ENCODE measurements at regions of chr1 and their contacts with region 1.

Region 1: GRCh38 chr1:115337633-115338456 is at the start of gene NGF:
- DNase-seq: peak; percentile 44 to 82 (median 68)
- ATAC-seq: peak; percentile 65 to 91 (median 84)
- H3K4me3 ChIP-seq: peak within 1 kb of the TSS; percentile 57 to 91 (median 70)
- H3K27ac ChIP-seq: peak within 1 kb of the TSS; percentile 15 to 91 (median 80)
- H3K4me1 ChIP-seq: peaks cover 0 to 50% (median 22%) of the 10 kb centered on the region in 12 donors
- H3K27me3 ChIP-seq: peaks cover 0 to 32% (median 0%) of the 10 kb centered on the region in 9 donors
- CTCF ChIP-seq: peak in 1 of 12 donors; percentile 12
- POLR2A ChIP-seq: peak; percentile 27 to 77
- total RNA-seq, gene NGF: 0.94 to 13.6 (median 2.9) TPM

Region 2: GRCh38 chr1:115098979-115099692 is 238.7 kb before region 1 on chr1:
- intact Hi-C with region 1: no loop called
- DNase-seq: peak in 2 of 5 donors; percentile 21 to 45
- ATAC-seq: peak; percentile 74 to 80 (median 76)
- H3K4me3 ChIP-seq: peak overlapping the region in 8 of 12 donors; percentile 15 to 52 (median 36)
- H3K27ac ChIP-seq: peak overlapping the region in 7 of 12 donors; percentile 10 to 82 (median 38)
- H3K4me1 ChIP-seq: peaks cover 0 to 16% (median 0%) of the 10 kb centered on the region in 12 donors
- H3K27me3 ChIP-seq: no peaks in the 10 kb centered on the region
- CTCF ChIP-seq: no peak
- POLR2A ChIP-seq: no peak

Region 3: DNA sequence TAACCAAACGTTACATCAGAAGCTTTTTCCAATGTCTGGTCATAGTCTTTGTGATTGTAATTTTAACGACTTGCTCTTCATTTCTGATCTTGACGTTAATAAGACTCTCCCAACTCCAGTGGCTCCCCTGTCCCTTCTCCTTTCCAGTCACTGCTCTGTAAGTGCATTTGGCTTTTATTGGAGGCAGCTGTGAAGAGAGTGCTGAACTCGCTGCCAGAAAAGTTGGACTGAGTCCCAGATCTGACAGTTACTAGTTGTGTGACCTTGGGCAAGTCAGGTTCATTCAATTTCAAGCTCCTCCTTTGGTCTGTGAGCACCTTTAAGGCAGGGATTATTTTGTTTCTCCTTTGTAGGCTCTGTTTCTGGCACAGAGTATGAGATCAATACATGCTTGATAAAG is 138.9 kb before region 1 on chr1:
- intact Hi-C with region 1: no loop called
- DNase-seq: peak in 4 of 5 donors; percentile 57 to 66 (median 62)
- ATAC-seq: peak; percentile 70 to 96 (median 94)
- H3K4me3 ChIP-seq: no peak overlapping the region
- H3K27ac ChIP-seq: peak overlapping the region in 6 of 12 donors; percentile 2 to 50 (median 17)
- H3K4me1 ChIP-seq: peaks cover 0 to 32% (median 9%) of the 10 kb centered on the region in 12 donors
- H3K27me3 ChIP-seq: no peaks in the 10 kb centered on the region
- CTCF ChIP-seq: no peak
- POLR2A ChIP-seq: no peak

Region 4: DNA sequence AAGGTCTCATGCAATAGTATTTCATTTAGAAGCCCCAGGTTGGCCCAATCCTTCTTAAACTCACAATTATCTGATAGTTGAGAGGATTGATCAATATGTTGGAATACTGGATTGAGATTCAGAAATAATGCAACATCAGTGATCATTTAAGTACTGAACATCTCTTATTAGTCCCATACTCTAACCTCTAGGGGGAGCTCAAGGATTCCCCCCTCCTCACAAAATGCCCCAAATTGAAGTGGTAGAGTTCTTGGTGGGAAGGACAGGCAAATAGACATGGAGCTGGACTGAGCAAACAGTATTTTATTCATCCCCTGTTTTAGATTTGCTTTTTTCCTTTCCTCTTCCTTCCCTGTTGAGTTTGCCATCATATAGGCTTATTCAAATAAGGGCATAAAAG is 62.6 kb before region 1 on chr1:
- intact Hi-C with region 1: loop called in 2 of 10 experiments (anchors 5 to 10 kb)
- DNase-seq: no peak
- ATAC-seq: no peak
- H3K4me3 ChIP-seq: no peak overlapping the region
- H3K27ac ChIP-seq: peak overlapping the region in 5 of 12 donors; percentile 7 to 66 (median 28)
- H3K4me1 ChIP-seq: peaks cover 0 to 16% (median 0%) of the 10 kb centered on the region in 12 donors
- H3K27me3 ChIP-seq: no peaks in the 10 kb centered on the region
- CTCF ChIP-seq: peak in 11 of 12 donors; percentile 22 to 51 (median 33)
- POLR2A ChIP-seq: no peak

Region 5: DNA sequence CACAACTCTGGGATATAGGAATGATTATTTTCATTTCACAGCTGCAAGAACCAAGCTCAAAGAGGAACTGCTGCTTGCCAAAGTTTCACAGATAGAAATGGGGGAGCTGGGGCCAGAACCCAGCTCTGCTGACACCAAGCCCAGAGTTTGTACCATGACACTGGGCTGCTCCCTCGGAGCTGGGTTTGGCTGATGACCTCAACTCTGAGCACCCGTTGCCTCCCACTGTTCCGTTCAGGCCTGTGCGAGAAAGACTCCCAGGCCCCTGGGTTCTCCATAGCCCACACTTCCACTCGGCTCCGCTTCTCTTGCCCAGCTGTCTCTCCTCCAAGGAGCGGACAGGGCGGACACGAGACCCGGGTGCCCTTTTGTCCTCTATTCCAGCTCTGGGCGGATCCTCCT is 55.0 kb before region 1 on chr1:
- intact Hi-C with region 1: loop called in 3 of 10 experiments (anchors 5 to 10 kb)
- DNase-seq: peak; percentile 80 to 89 (median 83)
- ATAC-seq: peak; percentile 82 to 96 (median 93)
- H3K4me3 ChIP-seq: peak overlapping the region in 5 of 12 donors; percentile 5 to 42 (median 23)
- H3K27ac ChIP-seq: peak overlapping the region; percentile 55 to 89 (median 82)
- H3K4me1 ChIP-seq: peaks cover 0 to 35% (median 14%) of the 10 kb centered on the region in 12 donors
- H3K27me3 ChIP-seq: no peaks in the 10 kb centered on the region
- CTCF ChIP-seq: no peak
- POLR2A ChIP-seq: no peak

Region 6: GRCh38 chr1:115289940-115290339 is 47.9 kb before region 1 on chr1:
- intact Hi-C with region 1: loop called in 1 of 10 experiments (anchors 5 kb)
- DNase-seq: no peak
- ATAC-seq: no peak
- H3K4me3 ChIP-seq: no peak overlapping the region
- H3K27ac ChIP-seq: no peak overlapping the region
- H3K4me1 ChIP-seq: peaks cover 0 to 19% (median 2%) of the 10 kb centered on the region in 12 donors
- H3K27me3 ChIP-seq: no peaks in the 10 kb centered on the region
- CTCF ChIP-seq: no peak
- POLR2A ChIP-seq: no peak

Region 7: GRCh38 chr1:115302390-115302961 is 35.4 kb before region 1 on chr1:
- intact Hi-C with region 1: no loop called
- DNase-seq: peak in 2 of 5 donors; percentile 35 to 39
- ATAC-seq: peak in 3 of 4 donors; percentile 22 to 80 (median 79)
- H3K4me3 ChIP-seq: no peak overlapping the region
- H3K27ac ChIP-seq: peak overlapping the region in 5 of 12 donors; percentile 17 to 50 (median 35)
- H3K4me1 ChIP-seq: peaks cover 0 to 44% (median 8%) of the 10 kb centered on the region in 12 donors
- H3K27me3 ChIP-seq: no peaks in the 10 kb centered on the region
- CTCF ChIP-seq: no peak
- POLR2A ChIP-seq: no peak